ENCODE measurements at regions of chr3 and their contacts with region 1.

Region 1: DNA sequence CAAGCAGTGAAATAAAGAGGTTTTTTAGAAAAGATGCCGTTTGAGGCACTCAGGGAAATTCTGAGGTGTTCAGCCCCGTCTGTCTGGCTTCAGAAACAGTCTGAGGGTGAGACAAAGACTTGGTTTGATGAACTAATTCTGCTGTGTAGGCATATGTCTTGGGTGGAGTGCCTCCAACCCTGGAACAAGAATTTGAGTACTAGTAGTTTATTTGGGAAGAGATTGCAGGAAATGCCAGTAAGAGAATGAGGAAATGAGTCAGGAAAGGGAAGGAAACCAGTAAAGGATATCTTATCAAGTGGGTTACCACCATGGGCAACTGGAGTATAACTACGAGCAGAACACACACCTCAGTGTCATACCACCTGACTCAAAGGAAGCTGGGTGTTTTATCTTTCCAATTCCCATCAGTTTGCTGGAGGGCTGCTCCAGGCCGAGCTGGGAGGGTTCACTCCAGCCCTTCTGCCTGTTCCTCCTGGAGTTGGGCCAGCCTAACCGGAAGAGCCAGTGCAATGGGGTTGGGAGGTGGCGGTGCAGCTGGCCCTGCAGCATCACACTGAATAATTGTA is 75.3 kb downstream of the TGFBR2 start:
- DNase-seq: no peak
- ATAC-seq: peak; percentile 52 to 66
- H3K4me3 Mint-ChIP-seq: peak overlapping the region; percentile 13 to 94 (median 68)
- H3K27ac Mint-ChIP-seq: peak overlapping the region; percentile 75 to 100 (median 91)
- H3K4me1 Mint-ChIP-seq: peaks cover 56 to 98% (median 96%) of the 10 kb centered on the region in 4 donors
- H3K27me3 Mint-ChIP-seq: no peaks in the 10 kb centered on the region

Region 2: GRCh38 chr3:30324587-30324986 is 357.1 kb before region 1 on chr3:
- POLR2A ChIA-PET with region 1: no interaction called
- DNase-seq: no peak
- ATAC-seq: no peak
- H3K4me3 Mint-ChIP-seq: no peak overlapping the region
- H3K27ac Mint-ChIP-seq: peak overlapping the region in 2 of 10 donors; percentile 43 to 62
- H3K4me1 Mint-ChIP-seq: peaks cover 11 to 20% (median 16%) of the 10 kb centered on the region in 4 donors
- H3K27me3 Mint-ChIP-seq: no peaks in the 10 kb centered on the region

Region 3: GRCh38 chr3:30426293-30426993 is 255.3 kb before region 1 on chr3:
- POLR2A ChIA-PET with region 1: no interaction called
- DNase-seq: no peak
- ATAC-seq: no peak
- H3K4me3 Mint-ChIP-seq: no peak overlapping the region
- H3K27ac Mint-ChIP-seq: no peak overlapping the region
- H3K4me1 Mint-ChIP-seq: peaks cover 0 to 9% (median 3%) of the 10 kb centered on the region in 4 donors
- H3K27me3 Mint-ChIP-seq: no peaks in the 10 kb centered on the region

Region 4: GRCh38 chr3:30628901-30629590 is 52.7 kb before region 1 on chr3:
- POLR2A ChIA-PET with region 1: interaction called, 14 read pairs
- DNase-seq: peak in 1 of 10 donors; percentile 48
- ATAC-seq: peak; percentile 7 to 22
- H3K4me3 Mint-ChIP-seq: peak overlapping the region; percentile 38 to 82 (median 76)
- H3K27ac Mint-ChIP-seq: peak overlapping the region; percentile 91 to 100 (median 96)
- H3K4me1 Mint-ChIP-seq: peaks cover 46 to 99% (median 87%) of the 10 kb centered on the region in 4 donors
- H3K27me3 Mint-ChIP-seq: no peaks in the 10 kb centered on the region